ENCODE measurements at regions of chr7 and their contacts with region 1.

Region 1: GRCh38 chr7:135650831-135651573 is 11.3 kb upstream of the STMP1 start:
- DNase-seq: peak; percentile 67
- ATAC-seq: peak; percentile 42; the same call in 1 of the 2 replicates
- H3K4me3 ChIP-seq: no peak overlapping the region
- H3K27ac ChIP-seq: no peak overlapping the region
- H3K4me1 ChIP-seq: peaks cover 2% of the 10 kb centered on the region
- H3K27me3 ChIP-seq: no peaks in the 10 kb centered on the region
- CTCF ChIP-seq: no peak
- POLR2A ChIP-seq: no peak
- RAD21 ChIP-seq: no peak

Region 2: GRCh38 chr7:135601182-135601581 is 49.8 kb before region 1 on chr7:
- CTCF ChIA-PET with region 1: no interaction called
- POLR2A ChIA-PET with region 1: no interaction called
- dilution Hi-C with region 1: no loop called
- in situ Hi-C with region 1: no loop called
- intact Hi-C with region 1: loop called (anchors 5 kb)
- DNase-seq: peak; percentile 67
- ATAC-seq: peak; percentile 42; the same call in 1 of the 2 replicates
- H3K4me3 ChIP-seq: no peak overlapping the region
- H3K27ac ChIP-seq: no peak overlapping the region
- H3K4me1 ChIP-seq: peaks cover 2% of the 10 kb centered on the region; the same call in 1 of the 2 replicates
- H3K27me3 ChIP-seq: no peaks in the 10 kb centered on the region
- CTCF ChIP-seq: no peak
- POLR2A ChIP-seq: no peak
- RAD21 ChIP-seq: no peak